WTC11 (cell line): ENCODE measurements at regions of chr1 and their contacts with region 1.

Region 1: GRCh38 chr1:208245185-208245705 is 1.1 kb upstream of the PLXNA2 start:
- DNase-seq: peak; percentile 84
- ATAC-seq: peak; percentile 51
- H3K4me3 Mint-ChIP-seq: peak overlapping the region; percentile 79
- H3K27ac Mint-ChIP-seq: no peak overlapping the region
- H3K4me1 Mint-ChIP-seq: peaks cover 24% of the 10 kb centered on the region
- H3K27me3 Mint-ChIP-seq: peaks cover 53% of the 10 kb centered on the region
- CTCF ChIP-seq: peak; percentile 57

Region 2: GRCh38 chr1:208101661-208102431 is 143.4 kb before region 1 on chr1:
- CTCF ChIA-PET with region 1: interaction called, 19 read pairs
- POLR2A ChIA-PET with region 1: no interaction called
- DNase-seq: peak; percentile 26
- ATAC-seq: peak; percentile 79
- H3K4me3 Mint-ChIP-seq: no peak overlapping the region
- H3K27ac Mint-ChIP-seq: no peak overlapping the region
- H3K4me1 Mint-ChIP-seq: peaks cover 34% of the 10 kb centered on the region
- H3K27me3 Mint-ChIP-seq: no peaks in the 10 kb centered on the region; the same call in 1 of the 2 replicates
- CTCF ChIP-seq: no peak

Region 3: GRCh38 chr1:208233546-208233945 is 11.7 kb before region 1 on chr1:
- CTCF ChIA-PET with region 1: interaction called, 46 read pairs
- POLR2A ChIA-PET with region 1: interaction called, 3 read pairs
- DNase-seq: peak; percentile 69
- ATAC-seq: peak; percentile 86
- H3K4me3 Mint-ChIP-seq: no peak overlapping the region
- H3K27ac Mint-ChIP-seq: peak overlapping the region; percentile 15
- H3K4me1 Mint-ChIP-seq: peaks cover 63% of the 10 kb centered on the region
- H3K27me3 Mint-ChIP-seq: peaks cover 2% of the 10 kb centered on the region
- CTCF ChIP-seq: no peak

Region 4: GRCh38 chr1:208289716-208290115 is 44.5 kb after region 1 on chr1:
- CTCF ChIA-PET with region 1: interaction called, 10 read pairs
- POLR2A ChIA-PET with region 1: no interaction called
- DNase-seq: no peak
- ATAC-seq: no peak
- H3K4me3 Mint-ChIP-seq: no peak overlapping the region
- H3K27ac Mint-ChIP-seq: no peak overlapping the region
- H3K4me1 Mint-ChIP-seq: peaks cover 16% of the 10 kb centered on the region
- H3K27me3 Mint-ChIP-seq: peaks cover 5% of the 10 kb centered on the region; the same call in 1 of the 2 replicates
- CTCF ChIP-seq: no peak

Region 5: GRCh38 chr1:208476340-208477041 is 231.2 kb after region 1 on chr1:
- CTCF ChIA-PET with region 1: interaction called, 11 read pairs
- POLR2A ChIA-PET with region 1: interaction called, 3 read pairs
- DNase-seq: peak; percentile 40
- ATAC-seq: peak; percentile 97
- H3K4me3 Mint-ChIP-seq: no peak overlapping the region
- H3K27ac Mint-ChIP-seq: peak overlapping the region; percentile 37; the same call in 1 of the 2 replicates
- H3K4me1 Mint-ChIP-seq: peaks cover 18% of the 10 kb centered on the region
- H3K27me3 Mint-ChIP-seq: no peaks in the 10 kb centered on the region
- CTCF ChIP-seq: no peak

Region 6: GRCh38 chr1:208557046-208557722 is 311.9 kb after region 1 on chr1:
- CTCF ChIA-PET with region 1: no interaction called
- POLR2A ChIA-PET with region 1: no interaction called
- DNase-seq: no peak
- ATAC-seq: no peak
- H3K4me3 Mint-ChIP-seq: no peak overlapping the region
- H3K27ac Mint-ChIP-seq: no peak overlapping the region
- H3K4me1 Mint-ChIP-seq: no peaks in the 10 kb centered on the region
- H3K27me3 Mint-ChIP-seq: no peaks in the 10 kb centered on the region
- CTCF ChIP-seq: no peak